Caco-2 (cell line): ENCODE measurements at regions of chrX and their contacts with region 1.

Region 1: DNA sequence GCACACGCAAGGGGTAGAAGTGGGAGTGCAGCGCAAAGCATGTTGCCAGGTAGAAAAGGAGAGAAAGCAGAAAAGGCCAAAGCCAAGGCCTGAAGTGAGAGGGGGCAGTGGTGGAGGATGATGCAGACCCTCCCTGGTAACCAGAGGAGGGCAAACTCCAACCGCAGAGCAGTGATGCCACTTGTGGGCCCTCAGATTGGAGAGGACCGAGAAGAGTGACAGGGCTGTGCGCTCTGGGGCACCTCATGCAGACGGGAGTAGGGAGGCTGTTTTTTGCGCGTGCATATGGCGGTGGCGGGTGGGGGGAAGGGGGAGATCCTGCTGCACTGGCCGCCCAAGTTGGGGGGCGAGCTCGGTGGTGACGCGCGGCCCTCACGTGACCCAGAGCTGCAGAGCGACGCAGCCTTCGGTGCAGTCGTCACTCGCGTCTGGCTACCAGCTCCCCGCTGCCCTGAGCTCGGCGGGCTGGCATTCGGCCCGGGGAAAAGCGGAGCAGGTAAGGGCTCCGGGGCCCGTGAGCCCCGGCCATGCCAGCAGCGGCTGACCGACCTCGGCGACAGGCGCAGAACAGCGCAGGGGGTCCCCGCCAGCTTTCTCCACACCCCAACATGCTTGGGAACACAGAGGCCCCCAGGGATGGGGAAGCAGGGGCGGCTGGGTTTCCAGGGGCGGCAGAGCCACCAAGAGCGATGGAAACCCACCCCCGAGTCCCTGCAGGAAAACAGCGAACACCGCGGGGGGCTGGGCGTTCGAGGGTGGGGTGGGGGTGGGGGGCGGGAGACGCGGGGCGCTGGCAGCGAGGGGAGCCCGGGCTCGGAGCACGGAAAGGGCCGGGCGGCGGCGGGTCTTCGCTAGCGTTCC is at the start of gene BEX3:
- DNase-seq: peak; percentile 56 to 57
- H3K4me3 ChIP-seq: peak within 1 kb of the TSS; percentile 79
- H3K4me3 Mint-ChIP-seq: peak within 1 kb of the TSS; percentile 86
- H3K27ac Mint-ChIP-seq: peak within 1 kb of the TSS; percentile 82
- H3K4me1 ChIP-seq: no peaks in the 10 kb centered on the region
- H3K4me1 Mint-ChIP-seq: peaks cover 5% of the 10 kb centered on the region
- H3K27me3 ChIP-seq: no peaks in the 10 kb centered on the region
- H3K27me3 Mint-ChIP-seq: no peaks in the 10 kb centered on the region
- CTCF ChIP-seq: no peak
- total RNA-seq, gene BEX3: 293 and 367 TPM in 2 replicates

Region 2: DNA sequence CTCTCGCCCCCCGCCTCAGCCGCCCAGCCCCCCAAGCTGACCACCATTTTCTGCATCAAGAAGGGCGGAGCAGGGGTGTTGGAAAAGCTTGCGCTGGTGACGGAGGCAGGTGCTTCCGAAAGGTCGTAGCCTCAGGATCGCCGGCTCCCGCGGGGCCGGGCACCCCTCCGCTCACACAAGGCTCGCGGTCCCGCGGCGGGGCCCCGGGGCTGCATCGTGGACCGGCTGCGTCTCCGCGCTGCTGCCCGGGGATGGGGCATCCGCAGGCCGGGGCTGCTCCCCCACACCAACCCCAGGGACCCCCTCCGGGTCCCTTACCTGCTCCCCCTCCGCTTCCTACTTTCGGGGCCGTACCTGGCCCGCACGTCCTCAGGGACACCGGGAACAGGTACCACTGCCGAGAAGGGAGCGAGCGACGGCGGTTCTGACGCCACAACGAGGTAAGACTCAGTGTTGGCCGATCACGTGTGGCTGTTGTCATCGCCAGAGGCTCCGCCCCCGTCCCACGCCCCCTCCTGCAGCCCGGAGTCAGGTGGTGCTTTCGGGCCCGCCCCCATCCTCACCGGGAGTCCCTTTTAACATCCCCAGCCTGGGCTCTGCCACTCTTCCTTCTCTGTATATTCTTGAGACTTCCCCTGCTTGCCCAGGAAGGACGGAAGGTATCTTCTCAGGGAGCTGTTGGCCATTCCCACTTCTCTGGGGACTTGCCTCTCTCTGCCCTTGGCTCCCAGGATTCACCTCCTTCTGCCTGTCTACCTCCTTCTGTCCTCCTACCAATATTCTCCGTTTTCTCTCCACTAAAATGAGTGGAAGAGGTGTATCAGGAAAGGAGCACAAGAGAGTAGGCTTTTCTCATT is 65.6 kb before region 1 on chrX and contains the start of gene BEX2:
- CTCF ChIA-PET with region 1: no interaction called
- POLR2A ChIA-PET with region 1: no interaction called
- intact Hi-C with region 1: no loop called
- DNase-seq: peak; percentile 83 to 87
- H3K4me3 ChIP-seq: peak within 1 kb of the TSS; percentile 57
- H3K4me3 Mint-ChIP-seq: peak within 1 kb of the TSS; percentile 72
- H3K27ac Mint-ChIP-seq: no peak within 1 kb of the TSS
- H3K4me1 ChIP-seq: no peaks in the 10 kb centered on the region
- H3K4me1 Mint-ChIP-seq: no peaks in the 10 kb centered on the region
- H3K27me3 ChIP-seq: no peaks in the 10 kb centered on the region
- H3K27me3 Mint-ChIP-seq: no peaks in the 10 kb centered on the region
- CTCF ChIP-seq: no peak
- total RNA-seq, gene BEX2: 16.8 and 24.5 TPM in 2 replicates

Region 3: DNA sequence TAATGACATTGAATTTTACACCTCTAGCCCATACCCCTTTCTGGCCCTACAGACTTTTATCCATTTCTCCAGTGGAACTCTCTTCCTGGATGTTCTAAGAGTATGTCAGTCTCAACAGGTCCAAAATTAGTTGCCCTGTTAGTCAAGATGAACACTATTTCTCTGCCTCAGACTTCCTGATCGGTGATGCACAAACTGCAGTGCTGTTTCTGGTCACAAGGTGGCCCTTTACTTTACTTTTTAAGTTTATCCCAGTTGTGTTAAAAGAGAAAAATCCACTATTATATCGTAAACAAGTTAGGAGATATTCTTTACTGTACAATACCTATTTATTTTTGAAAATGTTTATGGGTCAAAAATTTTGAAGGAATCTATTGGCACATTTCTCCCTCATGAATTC is 33.2 kb before region 1 on chrX:
- CTCF ChIA-PET with region 1: no interaction called
- POLR2A ChIA-PET with region 1: no interaction called
- intact Hi-C with region 1: loop called (anchors 5 kb)
- DNase-seq: peak; percentile 37
- H3K4me3 ChIP-seq: no peak overlapping the region
- H3K4me3 Mint-ChIP-seq: no peak overlapping the region
- H3K27ac Mint-ChIP-seq: no peak overlapping the region
- H3K4me1 ChIP-seq: no peaks in the 10 kb centered on the region
- H3K4me1 Mint-ChIP-seq: peaks cover 6% of the 10 kb centered on the region
- H3K27me3 ChIP-seq: no peaks in the 10 kb centered on the region
- H3K27me3 Mint-ChIP-seq: no peaks in the 10 kb centered on the region
- CTCF ChIP-seq: peak; percentile 37 to 67

Region 4: DNA sequence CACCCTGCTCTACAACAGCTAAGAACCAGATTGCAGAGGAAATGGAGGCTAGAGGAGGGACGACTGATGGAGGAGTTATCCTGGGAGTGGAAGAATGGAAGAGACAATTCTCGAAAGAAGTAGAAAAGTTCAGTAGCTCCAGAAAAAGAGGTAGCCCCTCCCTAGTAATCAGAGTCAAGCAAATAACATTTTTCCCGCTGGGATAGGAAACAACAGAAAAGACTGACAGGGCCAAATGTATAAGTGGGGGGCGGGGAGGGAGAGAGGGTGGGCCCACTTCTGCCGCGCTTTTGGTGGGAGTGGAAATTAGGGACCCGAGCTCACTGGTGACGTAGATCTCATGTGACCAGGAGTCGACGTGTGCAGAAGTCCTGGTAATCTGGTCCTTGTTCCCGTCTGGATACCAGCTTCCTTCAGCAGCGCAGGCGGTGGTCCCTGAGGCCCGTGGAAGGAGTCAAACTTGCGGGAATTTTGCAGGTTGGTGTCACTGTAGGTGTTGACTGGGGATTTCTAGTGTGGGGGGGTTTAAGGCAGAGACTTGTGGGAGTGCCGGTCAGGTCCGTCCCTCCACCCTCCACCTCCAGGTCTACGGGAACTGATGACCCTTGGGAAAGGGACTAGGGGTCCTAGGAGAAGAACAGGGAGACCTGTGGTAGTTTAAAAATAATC is 20.1 kb before region 1 on chrX and contains the start of gene TCEAL9:
- CTCF ChIA-PET with region 1: no interaction called
- POLR2A ChIA-PET with region 1: interaction called, 12 read pairs
- intact Hi-C with region 1: no loop called
- DNase-seq: peak; percentile 36 to 65
- H3K4me3 ChIP-seq: peak within 1 kb of the TSS; percentile 44
- H3K4me3 Mint-ChIP-seq: peak within 1 kb of the TSS; percentile 83
- H3K27ac Mint-ChIP-seq: peak within 1 kb of the TSS; percentile 73
- H3K4me1 ChIP-seq: peaks cover 11% of the 10 kb centered on the region
- H3K4me1 Mint-ChIP-seq: no peaks in the 10 kb centered on the region
- H3K27me3 ChIP-seq: no peaks in the 10 kb centered on the region
- H3K27me3 Mint-ChIP-seq: no peaks in the 10 kb centered on the region
- CTCF ChIP-seq: no peak
- total RNA-seq, gene TCEAL9: 41.9 and 44.9 TPM in 2 replicates

Region 5: DNA sequence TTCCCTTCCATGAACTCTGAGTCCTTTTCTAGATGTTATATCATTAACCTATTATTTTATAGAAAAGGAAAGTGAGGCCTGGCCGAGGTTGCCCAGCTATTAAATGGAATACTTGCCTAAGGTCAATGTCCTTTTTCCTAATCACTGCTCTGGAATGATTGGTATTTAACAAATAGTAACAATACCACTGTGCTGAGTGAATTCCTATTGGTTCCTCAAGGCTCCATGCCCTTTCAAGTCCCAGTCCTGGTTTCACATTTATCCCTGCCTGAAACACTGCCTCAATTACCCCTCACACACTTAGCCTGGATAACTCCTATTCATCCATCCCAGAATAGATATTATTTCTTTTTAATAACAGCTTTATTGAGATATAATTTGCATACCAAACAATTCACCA is 13.8 kb before region 1 on chrX:
- CTCF ChIA-PET with region 1: no interaction called
- POLR2A ChIA-PET with region 1: interaction called, 4 read pairs
- intact Hi-C with region 1: loop called (anchors 1 kb)
- DNase-seq: peak; percentile 37 to 40
- H3K4me3 ChIP-seq: no peak overlapping the region
- H3K4me3 Mint-ChIP-seq: peak overlapping the region; percentile 42
- H3K27ac Mint-ChIP-seq: peak overlapping the region; percentile 78
- H3K4me1 ChIP-seq: peaks cover 39% of the 10 kb centered on the region
- H3K4me1 Mint-ChIP-seq: peaks cover 34% of the 10 kb centered on the region
- H3K27me3 ChIP-seq: no peaks in the 10 kb centered on the region
- H3K27me3 Mint-ChIP-seq: no peaks in the 10 kb centered on the region
- CTCF ChIP-seq: no peak

Region 6: DNA sequence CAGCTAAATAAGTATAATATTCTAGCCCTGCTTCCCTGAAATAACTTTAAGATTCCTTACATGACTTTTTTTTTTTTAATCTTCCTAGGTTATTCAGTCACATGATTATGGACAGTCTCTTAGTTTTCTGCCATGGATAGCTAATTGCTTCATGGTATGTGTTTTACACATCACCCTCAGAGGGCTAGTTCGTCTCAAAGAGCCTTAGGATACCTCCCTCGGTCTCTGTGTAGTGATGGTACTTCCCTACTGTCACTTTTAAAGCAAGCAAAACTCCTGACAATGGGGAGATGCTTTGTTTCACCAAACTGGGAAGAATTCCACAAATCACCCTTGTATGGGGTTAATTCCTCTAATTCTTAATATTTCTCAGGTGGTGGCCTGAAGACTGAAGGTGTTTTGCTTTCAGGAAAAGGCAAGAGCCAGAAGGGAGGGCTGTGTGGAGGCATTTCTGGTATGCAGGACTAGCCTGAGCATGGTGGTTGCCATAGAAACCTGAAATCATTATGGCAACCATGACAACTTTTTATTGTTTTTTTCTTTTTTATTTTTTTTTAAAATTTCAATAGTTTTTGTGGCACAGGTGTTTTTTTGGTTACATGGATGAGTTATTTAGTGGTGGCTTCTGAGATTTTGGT is 70.4 kb after region 1 on chrX:
- CTCF ChIA-PET with region 1: no interaction called
- POLR2A ChIA-PET with region 1: interaction called, 10 read pairs
- intact Hi-C with region 1: no loop called
- DNase-seq: peak; percentile 49 to 61
- H3K4me3 ChIP-seq: no peak overlapping the region
- H3K4me3 Mint-ChIP-seq: no peak overlapping the region
- H3K27ac Mint-ChIP-seq: peak overlapping the region; percentile 64
- H3K4me1 ChIP-seq: peaks cover 25% of the 10 kb centered on the region
- H3K4me1 Mint-ChIP-seq: no peaks in the 10 kb centered on the region
- H3K27me3 ChIP-seq: no peaks in the 10 kb centered on the region
- H3K27me3 Mint-ChIP-seq: no peaks in the 10 kb centered on the region
- CTCF ChIP-seq: no peak

Region 7: GRCh38 chrX:103517246-103517645 is 140.9 kb after region 1 on chrX:
- CTCF ChIA-PET with region 1: no interaction called
- POLR2A ChIA-PET with region 1: no interaction called
- intact Hi-C with region 1: no loop called
- DNase-seq: no peak
- H3K4me3 ChIP-seq: no peak overlapping the region
- H3K4me3 Mint-ChIP-seq: no peak overlapping the region
- H3K27ac Mint-ChIP-seq: no peak overlapping the region
- H3K4me1 ChIP-seq: no peaks in the 10 kb centered on the region
- H3K4me1 Mint-ChIP-seq: no peaks in the 10 kb centered on the region
- H3K27me3 ChIP-seq: no peaks in the 10 kb centered on the region; the same call in 1 of the 2 replicates
- H3K27me3 Mint-ChIP-seq: peaks cover 7% of the 10 kb centered on the region
- CTCF ChIP-seq: no peak